ENCODE measurements at regions of chr6 and their contacts with region 1.

Region 1: GRCh38 chr6:166078294-166078693 is 89.4 kb downstream of the TBXT start:
- DNase-seq: no peak
- ATAC-seq: no peak
- H3K4me3 Mint-ChIP-seq: no peak overlapping the region
- H3K27ac Mint-ChIP-seq: no peak overlapping the region
- H3K4me1 Mint-ChIP-seq: no peaks in the 10 kb centered on the region
- H3K27me3 Mint-ChIP-seq: no peaks in the 10 kb centered on the region; the same call in 1 of the 2 replicates
- CTCF ChIP-seq: no peak

Region 2: DNA sequence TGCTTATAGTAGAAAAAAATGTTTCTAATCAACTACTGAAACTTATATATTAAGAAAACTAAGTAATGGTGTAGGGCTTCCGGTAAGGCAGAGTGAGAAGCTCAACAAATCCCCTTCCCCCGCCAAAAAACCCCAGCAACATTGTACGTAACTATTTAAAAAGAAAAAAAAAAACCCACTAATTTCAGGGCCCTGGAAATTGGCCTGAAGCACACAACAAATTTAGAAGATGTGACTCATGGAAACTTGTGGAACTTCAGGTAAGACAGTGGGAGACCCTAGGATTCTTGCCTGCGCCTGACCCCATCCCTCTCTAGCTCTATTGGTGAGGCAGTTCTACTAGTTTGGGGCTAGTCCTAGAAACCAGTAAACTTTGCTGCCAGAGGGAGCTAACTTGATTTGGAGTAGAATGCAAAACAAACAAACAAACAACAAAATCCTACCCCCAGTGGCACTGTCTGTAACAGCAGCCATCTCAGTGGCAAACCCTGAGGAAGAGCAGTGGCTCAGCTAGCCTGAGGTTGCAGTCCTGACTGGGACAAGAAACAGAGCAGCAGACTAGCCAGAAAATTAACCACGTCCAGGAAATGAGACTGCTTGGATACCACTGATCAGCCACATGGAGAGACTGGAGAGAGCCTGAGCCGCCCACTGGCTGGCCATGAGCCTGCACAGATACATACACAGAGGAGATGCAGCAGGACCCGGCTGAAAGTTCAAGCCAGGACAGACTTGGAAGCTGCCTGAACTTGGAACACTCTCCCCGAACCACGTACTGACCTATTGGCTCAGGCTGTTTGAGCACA is 45.7 kb before region 1 on chr6:
- CTCF ChIA-PET with region 1: interaction called, 13 read pairs
- POLR2A ChIA-PET with region 1: no interaction called
- DNase-seq: peak; percentile 42
- ATAC-seq: peak; percentile 98
- H3K4me3 Mint-ChIP-seq: no peak overlapping the region
- H3K27ac Mint-ChIP-seq: no peak overlapping the region
- H3K4me1 Mint-ChIP-seq: peaks cover 12% of the 10 kb centered on the region
- H3K27me3 Mint-ChIP-seq: peaks cover 3% of the 10 kb centered on the region; the same call in 1 of the 2 replicates
- CTCF ChIP-seq: no peak; the same call in none of the 2 replicates

Measured in WTC11 (cell line).